ENCODE measurements at regions of chr3 and their contacts with region 1.

Region 1: DNA sequence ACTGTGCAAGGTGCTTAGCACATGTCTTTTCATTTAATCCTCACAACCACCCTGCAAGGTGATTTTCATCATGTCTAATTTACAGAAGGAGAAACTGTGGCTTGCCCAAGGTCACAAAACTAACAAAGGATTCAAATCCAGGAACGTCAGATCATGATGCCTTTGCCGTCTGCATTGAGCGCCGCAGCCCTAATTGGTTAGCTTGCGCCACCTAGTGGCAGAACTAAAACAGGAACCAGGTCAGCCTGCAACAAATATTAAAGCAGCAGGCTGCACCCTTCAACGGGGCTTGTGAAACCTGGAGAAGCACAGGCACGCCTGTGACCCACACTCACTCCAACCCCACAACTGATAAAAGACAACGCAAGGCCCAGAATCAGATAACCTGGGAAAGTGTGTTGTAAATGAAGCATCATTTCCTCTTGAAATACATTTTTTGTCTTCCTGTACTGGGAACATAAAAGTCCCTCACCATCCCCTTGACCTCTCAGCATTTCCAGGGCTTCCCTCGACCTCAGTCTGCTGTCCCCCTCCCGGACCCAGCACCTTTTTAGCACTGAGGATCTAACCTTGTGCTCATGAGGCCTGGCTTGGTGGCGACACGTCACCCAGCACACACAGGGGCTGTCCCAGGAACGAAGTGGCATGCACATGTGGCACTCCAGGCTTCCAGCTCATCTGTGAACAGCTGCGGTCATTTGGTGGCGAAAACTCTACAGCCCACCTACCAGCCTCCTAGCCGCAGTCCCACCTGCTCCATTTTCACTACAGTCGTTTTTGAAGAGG is 17.3 kb downstream of the DPH3 start:
- DNase-seq: peak; percentile 65 to 91 (median 69)
- ATAC-seq: peak; percentile 89
- H3K4me3 ChIP-seq: no peak overlapping the region
- H3K4me1 ChIP-seq: peaks cover 3% of the 10 kb centered on the region
- CTCF ChIP-seq: peak; percentile 69

Region 2: DNA sequence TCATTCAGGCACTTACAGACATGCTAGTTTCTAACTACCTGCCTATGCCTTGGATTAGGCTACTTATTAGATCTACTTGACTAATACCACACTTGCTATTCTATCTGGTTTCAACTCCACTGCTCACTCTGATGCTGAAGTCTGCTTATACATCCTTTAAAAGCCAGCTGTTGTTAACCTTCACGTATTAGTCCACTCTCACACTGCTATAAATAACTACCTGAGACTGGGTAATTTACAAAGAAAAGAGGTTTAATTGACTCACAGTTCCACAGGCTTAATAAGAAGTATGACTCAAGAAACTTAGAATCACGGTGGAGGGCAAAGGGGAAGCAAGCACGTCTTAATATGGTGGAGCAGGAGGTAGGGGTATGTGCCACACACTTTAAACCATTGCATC is 402.0 kb before region 1 on chr3:
- intact Hi-C with region 1: no loop called
- DNase-seq: no peak
- ATAC-seq: no peak
- H3K4me3 ChIP-seq: no peak overlapping the region
- H3K4me1 ChIP-seq: no peaks in the 10 kb centered on the region
- CTCF ChIP-seq: no peak

Region 3: DNA sequence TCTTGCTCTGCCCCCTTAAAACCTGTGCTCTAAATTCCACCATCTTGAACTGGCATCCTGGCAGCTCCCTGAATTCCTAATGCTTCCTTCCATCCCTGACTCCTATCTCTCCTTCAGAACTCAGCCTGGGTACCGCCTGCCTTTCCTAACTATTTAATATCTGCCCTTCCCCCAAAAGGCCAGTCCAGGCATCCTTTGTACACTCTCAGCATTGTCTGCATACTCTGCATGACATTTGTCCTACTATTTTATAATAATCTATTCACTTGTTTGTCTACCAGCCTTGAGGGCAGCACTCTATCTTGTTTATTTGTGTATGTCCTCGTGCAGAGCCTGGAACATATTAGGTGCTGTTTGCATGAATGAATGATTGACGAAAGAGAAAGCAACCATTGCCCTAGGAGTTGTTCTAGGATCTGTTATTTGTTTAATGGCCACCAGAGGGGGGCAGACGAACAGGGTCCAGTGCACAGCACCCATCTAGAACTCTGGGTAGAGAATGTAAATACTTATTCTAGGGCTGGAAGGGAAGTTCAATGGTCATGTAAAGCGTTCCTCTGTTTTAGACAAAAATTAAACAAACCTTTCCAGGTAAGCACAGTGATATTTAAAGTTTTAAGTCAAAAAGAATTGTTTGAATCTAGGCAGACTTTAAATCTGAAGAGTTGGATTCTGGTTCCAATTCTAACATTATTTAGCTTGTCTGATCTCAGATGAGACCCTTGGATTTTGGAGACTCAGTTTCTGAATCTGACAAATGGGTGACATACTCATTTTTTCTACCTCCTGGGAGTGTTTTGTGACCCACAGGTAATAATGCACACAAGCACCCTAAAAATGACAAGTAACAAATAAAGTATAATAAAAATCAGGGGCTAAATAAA is 198.8 kb before region 1 on chr3:
- intact Hi-C with region 1: loop called in 1 of 2 experiments (anchors 5 kb)
- DNase-seq: peak in 1 of 3 donors; percentile 78
- ATAC-seq: peak; percentile 96
- H3K4me3 ChIP-seq: no peak overlapping the region
- H3K4me1 ChIP-seq: peaks cover 3% of the 10 kb centered on the region
- CTCF ChIP-seq: peak; percentile 54

Region 4: DNA sequence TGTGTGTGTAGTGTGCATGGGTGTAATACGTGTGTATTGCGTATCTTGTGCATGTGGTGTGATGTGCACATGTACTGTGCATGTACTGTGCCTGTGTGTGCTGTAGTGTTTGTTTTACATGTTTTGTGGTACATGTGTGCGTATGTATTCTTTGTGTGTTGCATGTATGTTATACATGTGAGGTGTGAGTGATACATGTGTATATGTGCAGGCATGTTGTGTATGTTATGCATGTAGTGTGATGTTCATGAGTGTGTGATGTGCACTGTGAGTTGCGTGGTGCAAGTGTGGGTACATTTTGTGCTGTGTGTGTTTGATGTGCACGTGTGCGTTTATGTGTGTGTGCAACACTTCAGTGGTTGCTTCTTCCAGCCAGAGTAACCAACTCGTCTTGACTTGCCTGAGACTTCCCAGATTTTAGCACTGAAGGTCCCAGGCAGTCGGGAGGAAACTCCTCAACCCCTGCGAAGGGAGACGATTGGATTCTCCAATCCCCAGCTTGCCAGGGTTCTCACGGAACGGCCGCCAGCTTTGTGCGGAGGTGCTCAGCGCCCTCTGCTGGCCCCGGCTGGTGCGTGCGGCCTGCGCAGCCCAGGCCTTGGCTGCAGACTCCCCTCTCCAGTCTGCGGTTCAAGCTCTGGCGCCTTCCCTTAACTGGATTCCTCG is 69.4 kb before region 1 on chr3:
- intact Hi-C with region 1: loop called in 1 of 2 experiments (anchors 5 kb)
- DNase-seq: peak; percentile 75 to 86 (median 83)
- ATAC-seq: peak; percentile 89
- H3K4me3 ChIP-seq: no peak overlapping the region
- H3K4me1 ChIP-seq: no peaks in the 10 kb centered on the region
- CTCF ChIP-seq: peak; percentile 95